Naive thymus-derived CD4-positive, alpha-beta T cell (primary cell): ENCODE measurements at regions of chr9 and their contacts with region 1.

Region 1: DNA sequence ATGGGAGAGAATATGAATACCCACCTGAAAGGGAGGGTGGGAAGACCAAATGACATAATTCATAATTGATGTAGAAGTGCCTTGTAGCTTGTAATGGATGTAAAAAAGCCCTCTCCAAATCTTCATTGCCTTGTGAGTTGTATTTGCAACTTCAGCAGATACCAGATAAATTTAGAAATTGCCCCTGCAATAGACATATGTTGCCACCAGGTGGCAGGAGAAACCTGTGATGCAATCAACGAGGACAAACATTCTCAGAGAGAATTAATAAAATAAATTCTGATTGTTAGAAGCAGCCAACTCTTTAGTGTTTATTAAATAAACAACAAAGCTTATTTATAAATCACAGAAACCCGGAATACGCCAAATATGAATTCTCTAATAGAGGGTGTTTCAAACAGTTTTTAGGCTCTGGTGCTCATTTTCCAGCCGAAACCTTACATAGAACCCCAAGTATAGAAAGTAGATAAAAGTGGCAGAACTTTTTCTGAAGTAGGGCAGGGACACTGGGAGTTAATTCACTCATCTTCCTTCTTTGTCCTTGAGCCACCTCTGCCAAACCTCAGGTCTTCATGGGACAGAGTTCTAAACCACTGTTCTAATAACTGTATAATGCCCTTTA is 147.8 kb downstream of the TMEM38B start:
- DNase-seq: peak in 6 of 9 donors; percentile 4 to 36 (median 26)
- ATAC-seq: no peak
- H3K4me3 ChIP-seq: no peak overlapping the region
- H3K4me3 Mint-ChIP-seq: no peak overlapping the region
- H3K27ac ChIP-seq: no peak overlapping the region
- H3K27ac Mint-ChIP-seq: no peak overlapping the region
- H3K4me1 ChIP-seq: no peaks in the 10 kb centered on the region
- H3K4me1 Mint-ChIP-seq: peaks cover 0 to 4% (median 0%) of the 10 kb centered on the region in 7 donors
- H3K27me3 ChIP-seq: no peaks in the 10 kb centered on the region
- H3K27me3 Mint-ChIP-seq: peaks cover 0 to 4% (median 0%) of the 10 kb centered on the region in 5 donors

Region 2: GRCh38 chr9:105608721-105609598 is 233.2 kb before region 1 on chr9:
- CTCF ChIA-PET with region 1: interaction called, 4 read pairs
- POLR2A ChIA-PET with region 1: no interaction called
- intact Hi-C with region 1: loop called in 1 of 2 experiments (anchors 2 kb)
- DNase-seq: peak in 6 of 9 donors; percentile 11 to 37 (median 30)
- ATAC-seq: peak; percentile 67
- H3K4me3 ChIP-seq: no peak overlapping the region
- H3K4me3 Mint-ChIP-seq: no peak overlapping the region
- H3K27ac ChIP-seq: no peak overlapping the region
- H3K27ac Mint-ChIP-seq: no peak overlapping the region
- H3K4me1 ChIP-seq: no peaks in the 10 kb centered on the region
- H3K4me1 Mint-ChIP-seq: peaks cover 0 to 5% (median 0%) of the 10 kb centered on the region in 7 donors
- H3K27me3 ChIP-seq: no peaks in the 10 kb centered on the region
- H3K27me3 Mint-ChIP-seq: no peaks in the 10 kb centered on the region

Region 3: DNA sequence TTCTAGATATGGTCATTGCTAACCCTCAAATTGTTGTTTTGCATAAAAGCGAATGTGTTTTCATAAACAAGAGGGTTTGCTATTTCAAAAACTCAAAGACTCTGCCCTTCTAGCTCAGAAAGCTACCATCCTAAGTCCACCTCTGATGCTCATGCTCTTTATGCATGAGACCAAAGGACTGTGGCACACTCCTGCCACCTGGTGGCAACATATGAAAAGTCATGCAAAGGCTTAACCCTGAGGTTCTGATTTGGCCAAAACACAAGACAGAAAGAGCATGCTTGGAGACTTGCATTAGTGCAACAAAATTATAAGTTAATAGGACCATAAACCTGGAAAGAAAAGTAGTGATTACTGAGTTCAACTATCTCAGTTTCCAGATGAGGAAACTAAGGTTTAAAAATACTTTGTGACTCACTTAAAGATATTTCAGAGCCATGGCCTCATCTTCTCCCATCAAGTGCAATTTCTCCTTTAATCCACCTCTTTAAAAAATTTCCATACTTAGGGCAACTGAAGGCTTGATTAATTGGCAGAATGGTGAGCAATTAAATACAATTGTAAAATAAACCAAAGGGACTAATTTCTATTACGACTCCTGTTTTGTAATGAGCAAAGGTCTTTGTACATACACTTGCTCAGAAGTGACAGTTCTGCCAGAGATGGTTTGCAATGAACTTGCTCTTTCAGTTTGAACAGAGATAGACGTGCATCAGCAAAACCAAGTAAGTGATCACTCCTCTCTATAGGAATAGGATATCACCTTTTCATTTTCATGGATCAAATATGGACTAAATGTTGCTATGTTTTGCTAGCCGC is 1330.2 kb after region 1 on chr9:
- CTCF ChIA-PET with region 1: interaction called, 4 read pairs
- POLR2A ChIA-PET with region 1: no interaction called
- intact Hi-C with region 1: loop called in 1 of 2 experiments (anchors 1 kb)
- DNase-seq: peak in 8 of 9 donors; percentile 13 to 56 (median 30)
- ATAC-seq: peak; percentile 74
- H3K4me3 ChIP-seq: no peak overlapping the region
- H3K4me3 Mint-ChIP-seq: no peak overlapping the region
- H3K27ac ChIP-seq: no peak overlapping the region
- H3K27ac Mint-ChIP-seq: no peak overlapping the region
- H3K4me1 ChIP-seq: no peaks in the 10 kb centered on the region
- H3K4me1 Mint-ChIP-seq: peaks cover 0 to 27% (median 0%) of the 10 kb centered on the region in 7 donors
- H3K27me3 ChIP-seq: no peaks in the 10 kb centered on the region
- H3K27me3 Mint-ChIP-seq: peaks cover 0 to 14% (median 2%) of the 10 kb centered on the region in 5 donors